Sciatic nerve (tissue), 2 donors: ENCODE measurements at regions of chr12 and their contacts with region 1.

Region 1: DNA sequence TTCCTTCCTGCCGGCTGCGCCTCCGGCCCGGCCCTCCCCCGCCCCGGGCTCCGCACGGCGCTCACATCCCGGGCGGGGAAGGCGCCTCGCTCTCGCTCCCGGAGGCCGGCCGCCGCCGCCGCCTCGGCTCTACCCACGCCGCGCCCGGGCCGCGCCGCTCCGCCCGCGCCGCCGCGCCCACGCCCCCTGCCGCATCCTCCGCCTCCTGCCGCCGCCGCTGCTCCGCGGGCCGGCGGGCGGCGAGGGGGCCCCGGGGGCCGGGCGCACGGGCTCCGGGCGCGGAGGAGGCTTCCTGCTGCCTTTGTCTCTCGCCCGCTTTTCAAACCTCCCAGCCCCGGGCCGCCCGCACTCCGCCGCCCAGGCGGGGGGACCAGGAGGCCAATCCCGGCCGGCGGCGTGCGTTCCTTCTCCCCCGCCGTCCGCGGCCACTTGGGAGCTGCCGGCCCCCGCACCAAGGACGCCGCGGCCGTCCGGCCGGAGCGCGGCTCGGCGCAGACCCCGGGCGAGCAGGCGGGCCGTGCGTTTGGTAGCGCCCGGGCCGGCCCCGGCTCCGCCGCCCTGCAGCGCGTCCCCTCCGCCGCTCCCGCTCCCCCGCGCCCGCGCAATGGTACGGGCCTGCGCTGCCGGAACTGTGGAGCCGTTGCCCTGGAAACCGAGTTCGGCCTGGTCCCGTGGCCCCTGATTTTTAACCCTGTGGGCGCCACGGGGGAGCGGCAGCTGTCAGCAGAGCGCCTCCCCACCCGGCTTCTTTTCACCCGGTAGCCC is at the start of gene FBXL14:
- DNase-seq: peak; percentile 95
- ATAC-seq: peak; percentile 91
- total RNA-seq, gene FBXL14: 14.0 TPM

Region 2: DNA sequence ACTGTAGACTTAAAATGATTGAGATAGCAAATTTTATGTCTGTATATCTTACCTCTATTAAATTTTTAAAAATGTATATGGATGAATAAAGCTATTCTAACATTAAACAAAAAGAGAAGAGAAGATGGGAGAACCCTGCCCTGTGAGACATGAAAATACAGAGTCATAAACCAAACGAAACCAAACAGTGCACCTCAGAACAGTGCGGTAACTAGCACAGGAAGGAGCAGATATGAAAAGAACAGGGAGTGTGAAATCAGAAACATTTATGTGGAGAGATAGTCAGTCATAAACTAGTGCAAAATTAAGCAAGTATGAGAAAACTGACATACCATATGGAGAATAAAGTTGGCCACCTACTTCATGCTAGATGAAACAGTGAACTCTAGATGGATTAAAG is 468.4 kb before region 1 on chr12:
- intact Hi-C with region 1: loop called (anchors 5 kb)
- DNase-seq: no peak
- ATAC-seq: no peak

Region 3: DNA sequence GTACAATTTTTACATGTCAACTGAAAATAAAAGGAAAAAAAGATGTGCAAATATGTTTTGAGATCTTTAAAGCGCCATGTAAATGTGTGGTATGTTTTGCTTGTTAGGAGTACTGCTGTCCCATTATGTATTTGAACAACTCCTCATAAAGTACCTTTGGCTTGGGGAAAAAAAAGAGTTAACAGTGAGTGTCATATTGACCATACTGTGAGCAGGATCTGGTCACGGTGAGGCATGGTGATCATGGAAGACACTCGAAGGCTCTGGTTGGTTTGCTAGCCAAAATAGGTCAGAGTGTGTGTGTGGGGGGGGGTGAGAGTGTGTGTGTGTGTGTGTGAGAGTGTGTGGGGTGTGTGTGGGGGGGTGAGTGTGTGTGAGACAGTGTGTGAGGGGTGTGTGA is 10.0 kb after region 1 on chr12:
- intact Hi-C with region 1: loop called (anchors 1 kb)
- DNase-seq: no peak
- ATAC-seq: no peak